ENCODE measurements at regions of chr9 and their contacts with region 1.

Region 1: GRCh38 chr9:16705121-16705604 is 165.3 kb downstream of the BNC2 start:
- DNase-seq: peak; percentile 73 to 86
- ATAC-seq: peak; percentile 92 to 99 (median 95)
- H3K4me3 ChIP-seq: peak overlapping the region in 8 of 10 donors; percentile 4 to 48 (median 40)
- H3K27ac ChIP-seq: peak overlapping the region; percentile 27 to 96 (median 86)
- H3K4me1 ChIP-seq: peaks cover 0 to 40% (median 16%) of the 10 kb centered on the region in 9 donors
- H3K27me3 ChIP-seq: peaks cover 0 to 4% (median 0%) of the 10 kb centered on the region in 7 donors
- CTCF ChIP-seq: no peak

Region 2: DNA sequence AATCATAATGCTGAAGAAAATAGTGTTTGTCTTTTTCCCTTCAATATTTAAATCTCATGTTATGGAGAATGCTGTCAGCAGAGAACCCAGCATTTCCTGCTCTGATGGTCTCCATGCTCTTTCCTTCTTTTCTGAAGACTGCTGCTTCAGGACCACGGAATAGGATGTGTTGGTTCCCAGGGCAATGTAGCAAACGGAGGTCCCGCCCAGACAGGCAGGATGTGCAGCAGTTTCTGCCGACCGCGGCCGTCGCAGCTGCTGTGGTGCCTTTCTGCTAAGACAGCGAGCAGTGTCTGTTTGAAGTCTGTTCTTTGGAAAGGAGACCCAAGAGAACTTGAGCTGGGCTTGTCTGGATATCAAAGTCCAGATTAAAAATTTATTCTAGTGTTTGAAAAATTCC is 498.0 kb before region 1 on chr9:
- intact Hi-C with region 1: loop called in 1 of 10 experiments (anchors 10 kb)
- DNase-seq: peak; percentile 34 to 36
- ATAC-seq: peak in 7 of 8 donors; percentile 50 to 73 (median 64)
- H3K4me3 ChIP-seq: no peak overlapping the region
- H3K27ac ChIP-seq: peak overlapping the region in 3 of 10 donors; percentile 19 to 39 (median 29)
- H3K4me1 ChIP-seq: peaks cover 0 to 15% (median 0%) of the 10 kb centered on the region in 9 donors
- H3K27me3 ChIP-seq: no peaks in the 10 kb centered on the region
- CTCF ChIP-seq: no peak

Region 3: DNA sequence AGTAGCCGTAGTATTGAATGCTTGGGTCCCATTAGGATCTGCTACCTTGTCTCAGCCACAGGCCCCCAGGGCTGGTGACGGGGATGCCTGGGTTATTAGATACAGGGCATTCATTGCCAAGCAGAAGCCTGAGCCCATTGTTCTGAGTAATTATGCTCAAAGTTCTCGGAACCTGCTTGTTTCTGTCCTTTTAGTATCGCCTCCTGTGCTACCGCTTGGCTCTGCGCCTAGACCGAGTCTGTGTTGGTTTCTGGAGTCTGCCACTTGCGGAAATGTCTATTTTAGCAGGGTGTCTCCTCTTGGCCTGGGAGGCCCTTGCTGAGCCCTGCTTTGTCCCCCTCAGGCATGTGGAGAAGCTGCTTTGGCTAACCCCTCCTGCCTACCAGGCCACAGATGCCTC is 340.8 kb before region 1 on chr9:
- intact Hi-C with region 1: loop called in 1 of 10 experiments (anchors 5 kb)
- DNase-seq: peak; percentile 58 to 76
- ATAC-seq: peak; percentile 76 to 92 (median 88)
- H3K4me3 ChIP-seq: no peak overlapping the region
- H3K27ac ChIP-seq: peak overlapping the region in 9 of 10 donors; percentile 3 to 84 (median 51)
- H3K4me1 ChIP-seq: peaks cover 0 to 27% (median 4%) of the 10 kb centered on the region in 9 donors
- H3K27me3 ChIP-seq: peaks cover 0 to 6% (median 0%) of the 10 kb centered on the region in 7 donors
- CTCF ChIP-seq: no peak

Region 4: DNA sequence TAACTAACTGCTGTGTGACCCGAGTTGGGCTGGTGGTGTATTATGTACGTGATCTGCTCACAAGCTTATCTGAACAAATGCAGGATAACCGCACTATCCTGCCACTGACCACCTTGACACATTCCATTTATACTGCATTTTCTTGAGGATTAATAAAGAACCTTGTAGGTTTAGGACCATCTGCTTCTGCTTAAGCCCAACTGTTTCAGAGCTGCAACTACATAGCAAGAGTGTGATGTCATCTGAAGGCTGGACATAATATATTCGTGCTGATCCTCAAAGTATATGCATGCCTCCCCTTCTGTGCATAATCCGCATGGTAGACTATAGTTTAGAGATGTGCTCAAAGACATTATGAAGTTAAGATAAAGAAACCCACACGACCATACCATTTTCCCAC is 270.6 kb before region 1 on chr9:
- intact Hi-C with region 1: no loop called
- DNase-seq: no peak
- ATAC-seq: no peak
- H3K4me3 ChIP-seq: no peak overlapping the region
- H3K27ac ChIP-seq: no peak overlapping the region
- H3K4me1 ChIP-seq: no peaks in the 10 kb centered on the region
- H3K27me3 ChIP-seq: no peaks in the 10 kb centered on the region
- CTCF ChIP-seq: no peak

Region 5: DNA sequence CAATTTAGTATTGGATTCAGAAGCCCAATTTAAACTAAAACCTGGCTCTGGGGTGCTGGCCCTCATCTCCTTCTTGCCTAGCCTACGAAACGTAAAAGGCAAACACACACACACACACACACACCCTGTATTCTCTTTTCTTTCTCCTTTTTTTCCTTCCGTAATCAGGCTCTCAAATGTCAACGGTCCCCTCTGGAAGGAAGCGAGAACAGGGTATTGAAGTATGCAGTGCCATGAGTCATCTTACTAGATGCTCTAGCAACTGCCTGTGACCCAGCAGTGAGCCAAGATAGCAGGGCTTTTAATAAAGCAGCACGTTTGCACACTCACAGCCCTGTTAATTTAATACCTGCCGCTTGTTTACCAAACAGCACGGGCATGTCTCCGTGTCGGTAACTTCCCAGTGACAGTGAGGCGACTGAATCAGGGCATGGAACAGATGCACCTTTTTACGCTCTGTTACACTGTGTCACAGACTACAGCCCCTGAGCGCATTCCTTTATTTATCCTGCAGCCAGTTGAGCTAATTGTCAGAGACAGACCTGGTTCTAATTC is 78.5 kb before region 1 on chr9:
- intact Hi-C with region 1: no loop called
- DNase-seq: peak in 1 of 2 donors; percentile 11
- ATAC-seq: peak in 7 of 8 donors; percentile 55 to 91 (median 74)
- H3K4me3 ChIP-seq: no peak overlapping the region
- H3K27ac ChIP-seq: peak overlapping the region in 5 of 10 donors; percentile 16 to 68 (median 22)
- H3K4me1 ChIP-seq: peaks cover 0 to 35% (median 17%) of the 10 kb centered on the region in 9 donors
- H3K27me3 ChIP-seq: no peaks in the 10 kb centered on the region
- CTCF ChIP-seq: no peak

Measured in heart right ventricle (tissue), 16 donors.